Endothelial cell of umbilical vein (primary cell): ENCODE measurements at regions of chr17 and their contacts with region 1.

Region 1: DNA sequence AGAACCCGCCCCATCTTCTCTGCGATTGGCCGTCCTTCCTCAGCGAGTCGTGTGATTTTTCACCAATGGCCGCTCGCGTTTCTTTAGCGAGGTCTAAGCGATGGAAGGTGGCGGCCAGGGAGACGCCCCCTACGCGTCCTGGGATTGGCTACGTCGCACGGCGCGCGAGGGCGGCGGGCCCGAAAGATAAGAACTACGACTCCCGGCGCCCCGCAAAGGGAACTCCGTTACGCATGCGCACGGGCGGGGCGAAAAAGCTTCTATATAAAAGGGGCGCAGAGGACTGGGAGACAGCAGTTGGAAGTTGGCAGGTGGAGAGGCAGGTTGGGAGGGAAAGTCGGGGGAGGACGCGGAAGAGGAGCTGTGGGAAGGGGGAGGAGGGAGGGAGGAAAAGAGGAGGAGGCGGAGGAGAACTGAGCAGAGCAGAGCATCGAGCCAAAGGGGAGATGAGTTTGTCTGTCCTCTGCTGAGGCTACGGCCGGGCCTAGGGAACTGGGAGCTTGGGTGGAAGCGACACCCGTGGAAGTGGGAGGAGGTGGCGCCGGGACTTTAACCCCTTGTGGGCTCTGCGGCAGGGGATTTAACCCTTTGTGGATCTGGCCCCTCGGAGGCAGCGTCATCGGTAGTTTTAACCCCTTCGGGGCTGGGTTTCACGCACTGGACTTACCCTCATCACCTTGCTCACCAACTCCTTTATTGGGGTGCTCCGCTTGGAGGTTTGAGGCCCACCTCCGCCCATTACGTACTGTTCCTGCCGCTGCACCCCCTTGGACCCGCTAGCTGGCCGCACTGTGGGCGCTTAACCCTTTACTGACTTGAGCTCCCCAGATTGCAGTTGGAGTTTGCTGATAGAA is at the start of gene HEXIM1:
- DNase-seq: peak; percentile 100
- H3K4me3 ChIP-seq: peak within 1 kb of the TSS; percentile 68 to 95 (median 90)
- H3K27ac ChIP-seq: peak within 1 kb of the TSS; percentile 97
- H3K4me1 ChIP-seq: peaks cover 24% of the 10 kb centered on the region
- H3K27me3 ChIP-seq: no peaks in the 10 kb centered on the region
- CTCF ChIP-seq: no peak
- POLR2A ChIP-seq: peak; percentile 100
- total RNA-seq, gene HEXIM1: 20.0 and 20.6 TPM in 2 replicates

Region 2: GRCh38 chr17:45161019-45161825 is 12.8 kb after region 1 on chr17:
- CTCF ChIA-PET with region 1: interaction called, 153 read pairs
- POLR2A ChIA-PET with region 1: interaction called, 189 read pairs
- dilution Hi-C with region 1: no loop called
- intact Hi-C with region 1: loop called (anchors 1 kb)
- DNase-seq: peak; percentile 100
- H3K4me3 ChIP-seq: peak overlapping the region; percentile 60 to 92 (median 80)
- H3K27ac ChIP-seq: peak overlapping the region; percentile 91
- H3K4me1 ChIP-seq: peaks cover 28% of the 10 kb centered on the region
- H3K27me3 ChIP-seq: no peaks in the 10 kb centered on the region
- CTCF ChIP-seq: no peak
- POLR2A ChIP-seq: peak; percentile 94

Region 3: GRCh38 chr17:45172454-45173286 is 24.3 kb after region 1 on chr17:
- CTCF ChIA-PET with region 1: interaction called, 11 read pairs
- POLR2A ChIA-PET with region 1: interaction called, 10 read pairs
- dilution Hi-C with region 1: no loop called
- intact Hi-C with region 1: no loop called
- DNase-seq: no peak
- H3K4me3 ChIP-seq: no peak overlapping the region
- H3K27ac ChIP-seq: no peak overlapping the region
- H3K4me1 ChIP-seq: peaks cover 14% of the 10 kb centered on the region
- H3K27me3 ChIP-seq: no peaks in the 10 kb centered on the region
- CTCF ChIP-seq: no peak
- POLR2A ChIP-seq: no peak

Region 4: DNA sequence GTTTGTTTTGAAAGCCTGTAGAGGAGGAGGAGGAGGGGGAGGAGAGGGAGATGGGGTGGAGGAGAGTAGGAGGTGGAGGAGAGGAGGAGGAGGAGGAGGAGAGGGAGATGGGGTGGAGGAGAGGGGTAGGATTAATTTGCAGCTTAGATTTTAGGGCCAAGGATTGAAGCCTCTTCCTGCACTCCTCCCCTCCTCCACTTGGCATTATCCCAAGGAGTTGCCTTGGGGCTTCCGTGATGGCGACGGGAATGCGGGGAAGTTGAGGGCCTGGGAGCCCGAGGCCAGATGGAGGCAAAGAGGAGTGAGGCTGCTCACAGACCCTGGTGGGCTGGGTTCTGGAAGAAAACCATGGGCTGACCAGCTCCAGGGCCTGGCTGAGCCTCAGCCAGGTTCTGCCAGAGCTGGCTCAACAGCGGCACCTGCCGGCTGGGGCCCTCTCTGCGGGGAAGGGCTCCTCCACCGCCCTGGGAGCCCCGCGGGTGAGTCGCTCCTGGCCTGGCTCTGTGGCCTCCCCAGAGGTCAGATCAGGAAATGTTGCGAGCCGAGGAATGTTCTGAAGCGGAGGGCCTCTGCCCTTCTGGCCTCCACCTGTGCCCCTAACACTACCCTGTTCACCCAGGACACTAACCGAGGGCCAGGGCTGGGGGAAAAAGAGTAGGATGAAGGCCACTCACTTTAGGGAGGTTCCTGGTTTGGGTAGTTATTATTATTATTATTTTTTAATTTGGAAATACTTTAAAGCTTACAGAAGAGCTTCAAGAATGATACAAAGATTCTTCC is 49.3 kb after region 1 on chr17:
- CTCF ChIA-PET with region 1: interaction called, 191 read pairs
- POLR2A ChIA-PET with region 1: interaction called, 67 read pairs
- dilution Hi-C with region 1: no loop called
- intact Hi-C with region 1: loop called (anchors 1 kb)
- DNase-seq: peak; percentile 86
- H3K4me3 ChIP-seq: no peak overlapping the region
- H3K27ac ChIP-seq: no peak overlapping the region
- H3K4me1 ChIP-seq: peaks cover 2% of the 10 kb centered on the region
- H3K27me3 ChIP-seq: no peaks in the 10 kb centered on the region
- CTCF ChIP-seq: peak; percentile 99 to 100
- POLR2A ChIP-seq: no peak

Region 5: GRCh38 chr17:45371414-45372327 is 223.3 kb after region 1 on chr17:
- CTCF ChIA-PET with region 1: no interaction called
- POLR2A ChIA-PET with region 1: interaction called, 3 read pairs
- dilution Hi-C with region 1: no loop called
- intact Hi-C with region 1: loop called (anchors 10 kb)
- DNase-seq: peak; percentile 93
- H3K4me3 ChIP-seq: peak overlapping the region in 2 of 3 experiments; percentile 12 to 18
- H3K27ac ChIP-seq: peak overlapping the region; percentile 97
- H3K4me1 ChIP-seq: peaks cover 20% of the 10 kb centered on the region
- H3K27me3 ChIP-seq: no peaks in the 10 kb centered on the region
- CTCF ChIP-seq: peak in 1 of 2 donors; percentile 3
- POLR2A ChIP-seq: peak; percentile 76